Left cardiac atrium (tissue), 4 donors: ENCODE measurements at regions of chr3 and their contacts with region 1.

Region 1: DNA sequence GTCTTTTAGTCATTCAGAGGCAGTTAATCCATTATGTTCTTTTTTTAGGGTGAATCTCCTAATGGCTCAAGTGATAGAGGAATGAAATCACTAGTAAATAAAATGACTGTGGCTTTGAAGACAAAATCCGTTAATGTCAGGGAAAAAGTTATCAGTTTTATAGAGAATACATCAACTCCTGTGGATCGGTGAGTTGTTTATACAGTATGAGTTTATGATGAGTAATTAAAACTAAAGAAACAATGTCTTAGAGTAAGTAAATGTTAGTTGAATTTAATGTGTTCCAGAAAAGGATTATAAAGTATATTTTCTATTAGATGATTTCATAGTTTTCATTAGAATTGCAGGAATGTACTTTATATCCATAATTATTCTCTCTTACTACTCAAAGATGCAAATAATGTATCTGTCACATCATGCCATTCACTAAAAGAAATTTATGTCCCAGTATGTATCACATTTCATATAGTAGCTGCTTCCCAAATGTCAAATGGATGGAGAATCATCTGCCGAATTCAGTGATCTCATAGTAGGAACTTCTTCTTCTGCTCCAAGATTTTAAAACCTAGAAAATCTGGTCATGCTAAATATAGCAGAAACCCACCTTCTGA is 24.1 kb upstream of the NIT2 start:
- DNase-seq: no peak
- ATAC-seq: no peak

Region 2: GRCh38 chr3:100297784-100298183 is 12.7 kb before region 1 on chr3:
- intact Hi-C with region 1: loop called in 1 of 2 experiments (anchors 1 kb)
- DNase-seq: no peak
- ATAC-seq: no peak